MCF 10A (cell line): ENCODE measurements at regions of chr2 and their contacts with region 1.

Region 1: GRCh38 chr2:135797497-135798274 is 39.3 kb downstream of the LCT start:
- DNase-seq: peak; percentile 81
- H3K4me3 Mint-ChIP-seq: no peak overlapping the region
- H3K27ac Mint-ChIP-seq: no peak overlapping the region
- H3K4me1 Mint-ChIP-seq: peaks cover 9% of the 10 kb centered on the region
- H3K27me3 Mint-ChIP-seq: no peaks in the 10 kb centered on the region
- CTCF ChIP-seq: peak; percentile 85

Region 2: DNA sequence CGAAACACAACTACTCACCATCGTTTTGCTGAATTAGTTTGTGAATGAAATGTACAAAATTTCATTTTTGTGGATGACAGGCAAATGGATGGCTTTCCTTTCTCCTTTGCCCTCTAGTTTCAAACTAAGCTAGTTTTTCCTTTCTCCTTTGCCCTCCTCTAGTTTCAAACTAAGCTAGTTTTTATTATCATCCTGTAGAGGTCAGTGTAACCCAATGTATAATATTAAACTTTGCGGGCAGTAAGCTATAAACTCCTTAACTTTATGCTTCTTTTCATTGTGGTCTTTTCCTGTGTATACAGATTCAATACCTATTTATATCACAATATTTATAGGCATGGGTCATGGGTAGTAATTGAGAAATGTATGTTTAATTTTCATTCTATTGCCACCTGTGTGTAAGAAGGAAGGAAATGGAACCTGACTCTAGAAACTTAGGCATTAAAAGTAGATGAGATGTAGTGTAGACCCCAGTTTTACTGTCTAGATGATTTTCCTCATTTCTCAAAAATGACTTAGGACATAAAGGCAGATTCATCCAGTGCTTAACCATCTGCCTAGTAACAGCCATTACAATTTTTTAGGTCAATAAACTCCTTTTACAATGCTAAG is 808.6 kb before region 1 on chr2:
- CTCF ChIA-PET with region 1: interaction called, 20 read pairs
- POLR2A ChIA-PET with region 1: interaction called, 3 read pairs
- intact Hi-C with region 1: loop called (anchors 5 kb)
- DNase-seq: peak; percentile 46
- H3K4me3 Mint-ChIP-seq: no peak overlapping the region
- H3K27ac Mint-ChIP-seq: no peak overlapping the region
- H3K4me1 Mint-ChIP-seq: no peaks in the 10 kb centered on the region
- H3K27me3 Mint-ChIP-seq: peaks cover 50% of the 10 kb centered on the region
- CTCF ChIP-seq: peak; percentile 46

Region 3: GRCh38 chr2:135741395-135742324 is 56.0 kb before region 1 on chr2 and contains the start of gene UBXN4:
- CTCF ChIA-PET with region 1: interaction called, 16 read pairs
- POLR2A ChIA-PET with region 1: interaction called, 4 read pairs
- intact Hi-C with region 1: no loop called
- DNase-seq: peak; percentile 99
- H3K4me3 Mint-ChIP-seq: peak within 1 kb of the TSS; percentile 81
- H3K27ac Mint-ChIP-seq: peak within 1 kb of the TSS; percentile 95
- H3K4me1 Mint-ChIP-seq: peaks cover 23% of the 10 kb centered on the region
- H3K27me3 Mint-ChIP-seq: no peaks in the 10 kb centered on the region
- CTCF ChIP-seq: peak; percentile 30
- total RNA-seq, gene UBXN4: 79.0 and 101 TPM in 2 replicates

Region 4: DNA sequence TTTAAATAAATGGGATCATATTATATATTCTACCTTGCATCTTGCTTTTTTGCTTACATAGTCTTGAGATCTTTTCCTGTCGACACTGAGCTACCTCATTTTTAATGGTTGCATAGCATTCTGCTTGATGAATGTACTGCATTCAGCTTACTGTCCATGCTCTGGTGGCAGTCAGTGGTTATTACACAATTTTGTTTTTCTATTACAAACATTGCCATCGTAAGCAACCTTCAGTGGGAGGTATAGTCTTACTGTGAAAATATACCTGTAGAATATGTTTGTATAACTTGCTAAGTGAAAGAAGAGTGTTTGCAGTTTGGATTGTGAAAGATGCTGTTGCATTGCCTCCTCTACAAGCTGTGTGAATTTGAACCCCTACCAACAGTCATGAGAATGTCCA is 12.7 kb before region 1 on chr2:
- CTCF ChIA-PET with region 1: interaction called, 59 read pairs
- POLR2A ChIA-PET with region 1: no interaction called
- intact Hi-C with region 1: no loop called
- DNase-seq: peak; percentile 42
- H3K4me3 Mint-ChIP-seq: no peak overlapping the region
- H3K27ac Mint-ChIP-seq: no peak overlapping the region
- H3K4me1 Mint-ChIP-seq: peaks cover 8% of the 10 kb centered on the region
- H3K27me3 Mint-ChIP-seq: no peaks in the 10 kb centered on the region
- CTCF ChIP-seq: no peak

Region 5: GRCh38 chr2:135948642-135949355 is 151.1 kb after region 1 on chr2:
- CTCF ChIA-PET with region 1: no interaction called
- POLR2A ChIA-PET with region 1: no interaction called
- intact Hi-C with region 1: no loop called
- DNase-seq: peak; percentile 86
- H3K4me3 Mint-ChIP-seq: peak overlapping the region; percentile 68
- H3K27ac Mint-ChIP-seq: peak overlapping the region; percentile 97
- H3K4me1 Mint-ChIP-seq: peaks cover 36% of the 10 kb centered on the region
- H3K27me3 Mint-ChIP-seq: no peaks in the 10 kb centered on the region
- CTCF ChIP-seq: no peak